H1 (cell line): ENCODE measurements at regions of chr3 and their contacts with region 1.

Region 1: GRCh38 chr3:64224826-64225610 is at the start of gene PRICKLE2:
- DNase-seq: peak in 1 of 2 experiments; percentile 43
- H3K4me3 ChIP-seq: peak within 1 kb of the TSS; percentile 20 to 49 (median 28); a peak in 6 of 8 replicates
- H3K27ac ChIP-seq: peak within 1 kb of the TSS; percentile 13; the same call in 1 of the 2 replicates
- H3K4me1 ChIP-seq: peaks cover 6 to 22% (median 17%) of the 10 kb centered on the region in 4 experiments; a peak in 6 of 7 replicates
- H3K27me3 ChIP-seq: peaks cover 0 to 6% (median 3%) of the 10 kb centered on the region in 4 experiments; a peak in 4 of 7 replicates
- CTCF ChIP-seq: peak in 2 of 3 experiments; percentile 17 to 18; a peak in 2 of 4 replicates
- EP300 ChIP-seq: no peak
- POLR2A ChIP-seq: no peak; a peak in 1 of 3 replicates
- RAD21 ChIP-seq: peak in 1 of 2 experiments; percentile 16; a peak in 1 of 4 replicates
- total RNA-seq, gene PRICKLE2: 8.0 and 8.9 TPM in 2 replicates

Region 2: GRCh38 chr3:63993653-63994079 is 231.4 kb before region 1 on chr3:
- CTCF ChIA-PET with region 1: no interaction called
- POLR2A ChIA-PET with region 1: no interaction called
- DNase-seq: peak; percentile 47 to 61
- H3K4me3 ChIP-seq: no peak overlapping the region
- H3K27ac ChIP-seq: no peak overlapping the region
- H3K4me1 ChIP-seq: no peaks in the 10 kb centered on the region
- H3K27me3 ChIP-seq: no peaks in the 10 kb centered on the region
- CTCF ChIP-seq: peak; percentile 80 to 95 (median 90)
- EP300 ChIP-seq: no peak
- POLR2A ChIP-seq: no peak
- RAD21 ChIP-seq: peak; percentile 91 to 94

Region 3: DNA sequence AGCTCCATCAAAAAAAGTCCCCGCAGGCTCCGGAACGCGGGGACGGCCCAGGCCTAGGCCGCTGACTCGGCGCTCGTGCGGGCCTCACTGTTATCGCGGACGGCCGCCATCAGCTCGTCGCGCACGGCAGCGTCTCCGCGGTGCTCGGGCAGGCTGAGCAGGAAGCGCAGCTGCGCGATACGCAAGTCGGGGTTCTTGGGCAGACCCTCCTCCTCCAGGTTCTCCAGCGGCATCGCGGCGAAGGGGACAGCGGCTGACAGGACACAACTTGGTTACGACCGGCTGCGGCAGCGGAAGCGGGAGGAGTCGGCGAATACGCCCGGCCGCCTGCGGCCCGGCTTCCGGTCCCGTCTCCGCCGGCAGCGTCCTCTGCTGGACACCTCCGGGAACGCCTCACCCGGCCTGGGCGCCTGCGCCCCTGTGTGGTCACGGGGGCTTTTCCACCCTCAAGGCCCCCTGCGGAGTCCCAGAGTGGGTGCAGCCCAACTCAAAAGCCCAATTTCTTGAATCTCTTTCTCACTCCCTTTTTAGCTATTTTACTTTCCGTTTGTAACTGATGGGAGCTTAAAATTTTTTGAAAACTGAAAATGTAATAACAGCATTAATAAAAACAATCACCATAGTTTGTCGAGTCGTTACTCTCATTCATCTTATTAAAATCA is 201.7 kb before region 1 on chr3 and contains the start of gene PSMD6:
- CTCF ChIA-PET with region 1: interaction called, 10 read pairs
- POLR2A ChIA-PET with region 1: no interaction called
- DNase-seq: peak; percentile 57 to 99
- H3K4me3 ChIP-seq: peak within 1 kb of the TSS; percentile 93 to 97 (median 94)
- H3K27ac ChIP-seq: peak within 1 kb of the TSS; percentile 81
- H3K4me1 ChIP-seq: peaks cover 3 to 5% (median 4%) of the 10 kb centered on the region in 4 experiments; a peak in 6 of 7 replicates
- H3K27me3 ChIP-seq: no peaks in the 10 kb centered on the region
- CTCF ChIP-seq: peak; percentile 96 to 100 (median 100)
- EP300 ChIP-seq: peak in 1 of 2 experiments; percentile 48; a peak in 1 of 3 replicates
- POLR2A ChIP-seq: peak in 1 of 2 experiments; percentile 80; a peak in 2 of 3 replicates
- RAD21 ChIP-seq: peak; percentile 46 to 63
- total RNA-seq, gene PSMD6: 99.6 and 104 TPM in 2 replicates

Region 4: DNA sequence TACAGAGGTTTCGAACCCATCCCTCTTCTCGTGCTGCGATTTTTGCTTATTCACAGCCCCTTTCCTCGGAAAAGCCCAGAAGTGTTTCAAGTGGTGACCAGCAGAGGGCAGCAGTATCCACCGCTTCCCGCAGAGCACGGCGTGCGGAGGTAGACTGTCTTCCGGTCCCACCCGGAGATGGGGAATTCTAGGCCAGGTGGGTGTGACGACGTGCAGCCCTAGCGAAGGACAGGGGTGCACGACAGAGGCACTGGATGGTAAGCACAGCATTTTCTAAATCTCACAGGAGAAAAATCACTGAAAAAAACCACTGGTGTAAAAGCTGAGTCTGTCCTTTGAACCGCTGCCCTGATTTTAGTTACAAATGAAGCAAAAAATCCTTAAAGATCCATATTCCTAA is 194.3 kb before region 1 on chr3:
- CTCF ChIA-PET with region 1: interaction called, 11 read pairs
- POLR2A ChIA-PET with region 1: no interaction called
- DNase-seq: peak; percentile 86 to 89
- H3K4me3 ChIP-seq: no peak overlapping the region
- H3K27ac ChIP-seq: no peak overlapping the region
- H3K4me1 ChIP-seq: peaks cover 0 to 7% (median 3%) of the 10 kb centered on the region in 4 experiments; a peak in 5 of 7 replicates
- H3K27me3 ChIP-seq: no peaks in the 10 kb centered on the region
- CTCF ChIP-seq: peak; percentile 82 to 94 (median 89)
- EP300 ChIP-seq: no peak
- POLR2A ChIP-seq: no peak
- RAD21 ChIP-seq: peak; percentile 98 to 99

Region 5: GRCh38 chr3:64213962-64214379 is 11.0 kb before region 1 on chr3:
- CTCF ChIA-PET with region 1: interaction called, 23 read pairs
- POLR2A ChIA-PET with region 1: interaction called, 5 read pairs
- DNase-seq: no peak
- H3K4me3 ChIP-seq: no peak overlapping the region
- H3K27ac ChIP-seq: no peak overlapping the region
- H3K4me1 ChIP-seq: peaks cover 10 to 22% (median 15%) of the 10 kb centered on the region in 4 experiments; a peak in 6 of 7 replicates
- H3K27me3 ChIP-seq: peaks cover 0 to 11% (median 4%) of the 10 kb centered on the region in 4 experiments; a peak in 2 of 7 replicates
- CTCF ChIP-seq: no peak
- EP300 ChIP-seq: no peak
- POLR2A ChIP-seq: no peak
- RAD21 ChIP-seq: no peak

Region 6: DNA sequence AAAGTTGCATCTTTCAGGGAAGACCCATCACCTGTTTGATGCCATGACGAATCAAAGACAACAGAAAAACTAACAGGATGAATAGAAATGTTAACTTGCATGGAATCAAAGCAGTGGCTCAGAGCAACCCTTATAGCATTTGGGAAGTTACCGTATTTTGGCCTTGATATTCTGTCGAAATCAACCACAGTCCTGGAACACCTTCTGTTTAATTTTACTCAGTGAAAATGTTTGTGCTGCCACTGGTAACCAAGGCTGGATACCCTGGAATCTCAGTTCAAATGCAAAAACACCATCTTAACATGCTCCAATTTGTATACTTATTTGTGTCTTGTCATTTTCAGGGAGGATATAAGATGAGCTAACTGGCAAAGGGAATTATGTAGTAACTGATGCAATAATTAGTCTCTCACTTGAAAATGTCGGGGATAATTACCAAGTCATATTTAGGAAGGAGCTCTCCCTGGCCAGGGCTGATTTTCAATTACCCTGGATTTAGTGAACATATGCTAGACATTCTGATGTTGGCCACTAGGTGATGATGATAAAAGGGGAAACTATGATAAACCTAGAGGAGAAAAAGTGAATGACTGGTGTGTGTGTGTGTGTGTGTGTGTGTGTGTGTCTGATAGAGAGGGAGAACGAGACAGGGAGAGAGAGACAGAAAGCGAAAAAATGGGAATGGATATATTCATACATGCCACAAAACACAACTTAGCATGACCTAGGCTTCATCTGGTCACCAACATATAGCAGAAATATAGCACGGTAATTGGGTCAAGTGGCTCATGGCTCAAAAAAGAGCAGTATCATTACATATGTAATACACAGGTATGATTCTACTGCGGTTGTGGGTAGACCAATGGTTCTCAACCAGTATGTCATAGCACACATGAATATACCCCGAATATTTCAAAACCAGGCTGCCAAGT is 19.3 kb after region 1 on chr3:
- CTCF ChIA-PET with region 1: interaction called, 10 read pairs
- POLR2A ChIA-PET with region 1: interaction called, 5 read pairs
- DNase-seq: no peak
- H3K4me3 ChIP-seq: no peak overlapping the region
- H3K27ac ChIP-seq: no peak overlapping the region
- H3K4me1 ChIP-seq: no peaks in the 10 kb centered on the region; a peak in 1 of 7 replicates
- H3K27me3 ChIP-seq: no peaks in the 10 kb centered on the region
- CTCF ChIP-seq: peak in 2 of 3 experiments; percentile 61 to 93; a peak in 3 of 4 replicates
- EP300 ChIP-seq: no peak
- POLR2A ChIP-seq: no peak
- RAD21 ChIP-seq: peak; percentile 38 to 51; a peak in 3 of 4 replicates

Region 7: GRCh38 chr3:64255516-64256315 is 30.7 kb after region 1 on chr3:
- CTCF ChIA-PET with region 1: interaction called, 10 read pairs
- POLR2A ChIA-PET with region 1: no interaction called
- DNase-seq: no peak
- H3K4me3 ChIP-seq: no peak overlapping the region
- H3K27ac ChIP-seq: no peak overlapping the region
- H3K4me1 ChIP-seq: no peaks in the 10 kb centered on the region; a peak in 2 of 7 replicates
- H3K27me3 ChIP-seq: no peaks in the 10 kb centered on the region
- CTCF ChIP-seq: no peak
- EP300 ChIP-seq: no peak
- POLR2A ChIP-seq: no peak
- RAD21 ChIP-seq: no peak

Region 8: DNA sequence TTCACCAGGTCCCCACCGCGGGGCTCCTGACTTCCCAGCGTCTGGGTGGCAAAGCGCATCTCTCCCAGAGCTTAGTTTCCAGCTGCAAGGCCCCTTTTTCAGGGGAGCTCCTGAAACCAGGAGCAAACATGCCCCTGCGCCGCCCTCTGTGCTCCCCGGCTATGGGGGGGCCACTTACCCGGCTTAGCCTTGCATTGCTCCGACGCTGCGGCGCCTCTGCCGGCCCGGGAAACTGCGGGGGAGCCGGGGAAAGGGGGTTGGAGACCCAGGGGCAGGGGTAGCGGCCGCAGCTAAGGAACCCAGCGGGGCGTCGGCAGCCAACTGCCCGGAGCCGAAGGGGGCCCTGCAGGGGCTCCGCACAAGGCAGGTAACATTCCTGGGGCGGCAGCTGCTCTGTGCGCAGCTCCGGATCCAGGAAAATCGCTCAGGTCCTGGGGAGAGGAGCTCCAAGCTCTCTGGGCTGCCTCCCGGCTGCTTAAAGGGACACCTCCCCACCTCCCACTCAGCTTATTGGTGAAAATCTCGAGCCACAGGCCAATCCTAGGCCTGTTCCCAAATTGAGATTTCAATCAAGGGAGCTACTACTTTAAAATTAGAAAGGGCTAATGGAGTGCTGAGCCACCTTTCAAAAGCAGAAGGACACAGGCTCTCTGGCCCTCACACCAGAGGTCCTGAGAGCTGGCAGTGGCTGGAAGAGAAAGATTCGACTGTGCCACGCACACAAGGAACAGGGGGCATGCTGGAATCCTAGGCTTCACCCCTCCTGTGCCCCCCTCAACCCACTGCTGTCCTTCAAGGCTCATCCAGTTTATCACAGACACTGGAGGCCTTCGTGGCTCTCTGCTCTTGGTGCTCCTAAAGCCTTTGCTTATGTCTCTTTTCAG is 42.9 kb after region 1 on chr3:
- CTCF ChIA-PET with region 1: interaction called, 10 read pairs
- POLR2A ChIA-PET with region 1: interaction called, 3 read pairs
- DNase-seq: peak; percentile 51 to 77
- H3K4me3 ChIP-seq: peak overlapping the region; percentile 57 to 70 (median 68)
- H3K27ac ChIP-seq: no peak overlapping the region
- H3K4me1 ChIP-seq: peaks cover 0 to 18% (median 9%) of the 10 kb centered on the region in 4 experiments; a peak in 4 of 7 replicates
- H3K27me3 ChIP-seq: no peaks in the 10 kb centered on the region
- CTCF ChIP-seq: no peak
- EP300 ChIP-seq: no peak; a peak in 1 of 3 replicates
- POLR2A ChIP-seq: no peak
- RAD21 ChIP-seq: no peak

Region 9: DNA sequence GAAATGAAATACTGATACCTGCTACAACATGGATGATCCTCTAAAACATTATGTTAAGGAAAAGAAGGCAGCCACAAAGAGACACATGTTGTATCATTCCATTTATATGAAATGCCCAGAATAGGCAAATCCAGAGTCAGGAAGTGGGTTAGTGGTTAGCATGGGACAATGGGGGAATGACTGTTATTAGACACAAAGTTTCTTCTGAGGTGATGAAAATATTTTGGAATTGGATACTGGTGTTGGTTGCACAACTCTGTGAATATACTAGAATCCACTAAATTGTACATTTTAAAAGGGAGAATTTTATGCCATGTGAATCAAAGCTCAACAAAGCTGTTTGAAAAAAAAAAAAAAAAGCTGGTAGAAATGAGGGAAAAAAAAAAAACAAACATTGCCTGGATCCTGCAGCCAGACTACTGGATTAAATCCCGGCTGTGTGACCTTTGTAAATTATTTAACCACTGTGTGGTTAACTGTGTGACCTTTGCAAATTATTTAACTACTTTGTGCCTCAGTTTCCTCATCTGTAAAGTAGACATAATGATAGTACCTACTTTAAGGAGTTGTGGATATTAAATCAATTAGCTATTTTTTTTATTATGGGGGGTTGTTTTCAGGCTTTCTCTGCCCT is 75.9 kb after region 1 on chr3:
- CTCF ChIA-PET with region 1: no interaction called
- POLR2A ChIA-PET with region 1: no interaction called
- DNase-seq: no peak
- H3K4me3 ChIP-seq: no peak overlapping the region
- H3K27ac ChIP-seq: no peak overlapping the region
- H3K4me1 ChIP-seq: no peaks in the 10 kb centered on the region
- H3K27me3 ChIP-seq: no peaks in the 10 kb centered on the region
- CTCF ChIP-seq: no peak
- EP300 ChIP-seq: no peak
- POLR2A ChIP-seq: no peak
- RAD21 ChIP-seq: no peak

Region 10: DNA sequence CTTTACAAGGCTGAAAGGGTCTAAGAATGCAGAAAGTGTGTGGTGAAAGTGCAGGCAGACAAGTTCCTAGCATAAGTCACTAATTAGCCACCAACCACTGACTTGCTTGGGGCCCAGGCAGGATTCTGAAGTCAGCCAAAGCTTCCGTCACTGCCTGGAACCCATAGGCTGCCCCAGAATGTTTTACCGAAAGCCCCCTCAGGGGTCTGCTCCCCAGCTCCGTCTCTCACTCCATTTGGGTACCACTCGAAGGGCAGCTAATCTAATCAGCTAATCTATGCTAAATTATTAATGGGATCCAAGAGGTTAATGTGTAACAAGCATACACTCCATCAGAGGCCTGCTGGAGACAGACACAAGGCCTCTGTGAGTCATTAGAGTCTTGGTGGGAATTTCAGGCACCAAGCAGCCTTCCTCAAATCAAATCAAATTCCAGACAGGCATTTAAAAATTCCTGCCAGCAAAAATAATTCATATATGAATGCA is 449.6 kb after region 1 on chr3:
- CTCF ChIA-PET with region 1: no interaction called
- POLR2A ChIA-PET with region 1: no interaction called
- DNase-seq: no peak
- H3K4me3 ChIP-seq: no peak overlapping the region
- H3K27ac ChIP-seq: no peak overlapping the region
- H3K4me1 ChIP-seq: peaks cover 3 to 14% (median 8%) of the 10 kb centered on the region in 4 experiments; a peak in 5 of 7 replicates
- H3K27me3 ChIP-seq: peaks cover 5 to 20% (median 13%) of the 10 kb centered on the region in 4 experiments; a peak in 6 of 7 replicates
- CTCF ChIP-seq: no peak
- EP300 ChIP-seq: no peak
- POLR2A ChIP-seq: no peak
- RAD21 ChIP-seq: no peak